ENCODE measurements at regions of chr1 and their contacts with region 1.

Region 1: GRCh38 chr1:81559662-81560350 is 240.9 kb upstream of the ADGRL2 start:
- DNase-seq: no peak
- ATAC-seq: peak; percentile 78
- H3K4me3 ChIP-seq: no peak overlapping the region
- H3K27ac ChIP-seq: no peak overlapping the region
- H3K4me1 ChIP-seq: no peaks in the 10 kb centered on the region
- H3K27me3 ChIP-seq: no peaks in the 10 kb centered on the region
- CTCF ChIP-seq: 0 out of 6 replicates have a peak, but pooled peaks of 1 of the 3 experiments have one; percentile 8
- EP300 ChIP-seq: no peak
- POLR2A ChIP-seq: no peak
- RAD21 ChIP-seq: no peak

Region 2: GRCh38 chr1:81254560-81254959 is 305.2 kb before region 1 on chr1:
- CTCF ChIA-PET with region 1: no interaction called
- POLR2A ChIA-PET with region 1: no interaction called
- RAD21 ChIA-PET with region 1: no interaction called
- SMC1A ChIA-PET with region 1: no interaction called
- in situ Hi-C with region 1: no loop called
- intact Hi-C with region 1: no loop called
- DNase-seq: no peak
- ATAC-seq: no peak
- H3K4me3 ChIP-seq: no peak overlapping the region
- H3K27ac ChIP-seq: no peak overlapping the region
- H3K4me1 ChIP-seq: no peaks in the 10 kb centered on the region
- H3K27me3 ChIP-seq: no peaks in the 10 kb centered on the region
- CTCF ChIP-seq: no peak
- EP300 ChIP-seq: no peak
- POLR2A ChIP-seq: no peak
- RAD21 ChIP-seq: no peak

Region 3: GRCh38 chr1:81574408-81574807 is 14.6 kb after region 1 on chr1:
- CTCF ChIA-PET with region 1: interaction called, 4 read pairs
- POLR2A ChIA-PET with region 1: interaction called, 5 read pairs
- RAD21 ChIA-PET with region 1: no interaction called
- SMC1A ChIA-PET with region 1: interaction called, 210 read pairs
- in situ Hi-C with region 1: no loop called
- intact Hi-C with region 1: loop called (anchors 2 kb)
- DNase-seq: no peak
- ATAC-seq: no peak
- H3K4me3 ChIP-seq: no peak overlapping the region
- H3K27ac ChIP-seq: no peak overlapping the region
- H3K4me1 ChIP-seq: no peaks in the 10 kb centered on the region
- H3K27me3 ChIP-seq: peaks cover 0 to 3% of the 10 kb centered on the region in 2 experiments; a peak in 1 of 4 replicates
- CTCF ChIP-seq: no peak
- EP300 ChIP-seq: no peak
- POLR2A ChIP-seq: no peak
- RAD21 ChIP-seq: no peak

Region 4: DNA sequence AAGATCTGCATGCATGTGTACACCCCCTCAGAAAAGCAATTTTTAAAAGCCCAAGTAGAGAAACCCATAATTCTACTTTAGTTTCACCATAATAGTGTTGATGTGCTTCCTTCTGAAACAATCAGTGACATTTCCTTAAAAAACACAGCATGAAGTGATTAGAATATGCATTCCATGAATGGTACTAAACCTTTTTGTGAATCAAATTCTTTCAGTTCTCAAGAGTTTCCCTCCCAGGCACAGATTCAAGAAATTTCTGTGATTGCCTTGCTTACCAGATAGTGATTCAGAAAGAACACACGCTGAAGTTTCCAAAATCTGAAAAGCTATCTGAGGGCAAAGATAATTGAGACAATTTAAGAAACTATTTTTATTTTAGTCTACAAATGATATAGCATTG is 104.5 kb after region 1 on chr1:
- CTCF ChIA-PET with region 1: no interaction called
- POLR2A ChIA-PET with region 1: no interaction called
- RAD21 ChIA-PET with region 1: no interaction called
- SMC1A ChIA-PET with region 1: no interaction called
- in situ Hi-C with region 1: no loop called
- intact Hi-C with region 1: no loop called
- DNase-seq: no peak
- ATAC-seq: no peak
- H3K4me3 ChIP-seq: no peak overlapping the region
- H3K27ac ChIP-seq: no peak overlapping the region
- H3K4me1 ChIP-seq: no peaks in the 10 kb centered on the region
- H3K27me3 ChIP-seq: 0 out of 4 replicates have a peak, but pooled peaks cover 0 to 2% of the 10 kb centered on the region in 2 experiments
- CTCF ChIP-seq: no peak
- EP300 ChIP-seq: no peak
- POLR2A ChIP-seq: no peak
- RAD21 ChIP-seq: no peak